ENCODE measurements at regions of chr6 and their contacts with region 1.

Region 1: GRCh38 chr6:53171605-53172446 is 23.2 kb upstream of the GCM1 start:
- DNase-seq: peak; percentile 86 to 93 (median 90)
- H3K4me3 ChIP-seq: no peak overlapping the region
- H3K27ac ChIP-seq: peak overlapping the region in 10 of 59 donors; percentile 9 to 65 (median 25)
- H3K27me3 ChIP-seq: no peaks in the 10 kb centered on the region
- CTCF ChIP-seq: peak; percentile 100

Region 2: GRCh38 chr6:52887910-52888535 is 283.8 kb before region 1 on chr6:
- intact Hi-C with region 1: no loop called
- DNase-seq: no peak
- H3K4me3 ChIP-seq: no peak overlapping the region
- H3K27ac ChIP-seq: no peak overlapping the region
- H3K27me3 ChIP-seq: no peaks in the 10 kb centered on the region
- CTCF ChIP-seq: no peak

Region 3: GRCh38 chr6:53119772-53120409 is 51.9 kb before region 1 on chr6:
- intact Hi-C with region 1: loop called in 1 of 2 experiments (anchors 10 kb)
- DNase-seq: no peak
- H3K4me3 ChIP-seq: no peak overlapping the region
- H3K27ac ChIP-seq: no peak overlapping the region
- H3K27me3 ChIP-seq: peaks cover 0 to 7% (median 0%) of the 10 kb centered on the region in 45 donors
- CTCF ChIP-seq: no peak

Region 4: DNA sequence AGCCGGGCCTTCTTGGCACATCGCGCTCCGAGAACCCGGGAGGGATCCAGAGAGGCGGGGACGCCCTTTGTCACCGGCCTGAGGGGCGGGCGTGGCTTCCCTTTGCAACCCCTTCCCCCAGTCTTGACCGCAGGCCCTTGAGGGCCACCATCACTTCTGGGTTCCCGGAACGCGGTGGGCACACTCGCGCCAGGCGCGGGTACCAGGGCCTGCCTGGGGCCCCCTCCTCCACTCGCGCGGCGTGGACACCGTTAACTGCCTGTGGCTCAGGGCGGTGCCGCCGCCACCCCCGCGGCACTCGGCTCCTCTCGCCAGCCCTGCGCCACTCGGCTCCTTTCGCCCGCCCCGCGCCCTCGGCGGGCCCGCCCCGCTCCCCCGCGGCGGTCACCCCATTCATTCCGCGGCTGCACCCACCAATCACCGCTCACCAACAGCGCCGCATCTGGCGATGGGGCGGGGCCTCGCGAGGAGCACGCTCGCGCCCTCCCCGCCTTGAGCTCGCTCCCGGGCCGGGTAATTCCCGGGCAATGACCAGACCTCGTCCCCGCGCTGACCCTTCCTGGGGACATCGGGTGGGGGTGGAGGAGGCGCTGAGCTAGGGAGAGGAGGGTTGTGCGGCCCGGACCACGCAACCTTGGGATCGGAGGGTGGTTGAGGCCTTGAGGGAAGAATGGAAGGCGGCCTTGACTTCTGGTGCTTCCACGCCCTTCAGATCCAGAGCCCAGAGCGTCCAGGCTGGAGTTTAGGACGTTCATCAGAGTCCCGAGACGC is 187.4 kb after region 1 on chr6:
- intact Hi-C with region 1: loop called (anchors 5 kb)
- DNase-seq: peak; percentile 93 to 99 (median 96)
- H3K4me3 ChIP-seq: peak overlapping the region; percentile 58 to 93 (median 79)
- H3K27ac ChIP-seq: peak overlapping the region; percentile 89 to 100 (median 98)
- H3K27me3 ChIP-seq: no peaks in the 10 kb centered on the region
- CTCF ChIP-seq: peak in 33 of 56 donors; percentile 12 to 60 (median 26)

Region 5: DNA sequence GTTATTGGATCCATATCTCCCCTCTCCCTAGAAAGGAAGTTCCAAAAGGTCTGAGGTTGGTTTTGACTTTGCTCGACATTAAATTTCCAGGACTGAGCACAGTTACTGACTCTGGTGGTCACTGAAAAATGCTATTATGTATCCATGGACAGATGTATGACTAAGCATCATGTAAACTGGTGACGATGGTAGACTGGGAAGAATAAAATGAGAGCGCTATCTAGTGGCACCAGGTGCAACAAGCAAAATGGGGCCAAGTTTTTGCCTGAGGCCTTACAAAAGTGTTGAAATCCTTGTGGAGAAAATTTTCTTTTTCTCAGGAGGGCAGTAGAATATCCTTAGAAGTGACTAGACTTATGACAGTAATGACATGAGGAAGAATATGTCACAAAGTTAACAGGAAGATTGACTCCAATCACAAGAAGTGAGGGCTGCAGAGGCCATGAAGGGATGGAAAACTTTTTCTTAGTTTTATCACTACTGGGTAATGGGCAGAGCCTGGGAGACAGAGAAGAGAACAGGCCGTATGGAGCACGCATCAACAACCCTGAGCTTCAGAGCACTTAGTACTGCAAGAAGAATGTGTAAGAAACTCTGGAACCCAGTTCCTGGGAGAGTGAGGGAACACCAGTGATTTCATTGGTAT is 265.9 kb after region 1 on chr6:
- intact Hi-C with region 1: loop called (anchors 2 kb)
- DNase-seq: peak in 2 of 10 donors; percentile 36 to 38
- H3K4me3 ChIP-seq: no peak overlapping the region
- H3K27ac ChIP-seq: peak overlapping the region in 57 of 59 donors; percentile 20 to 97 (median 88)
- H3K27me3 ChIP-seq: peaks cover 0 to 2% (median 0%) of the 10 kb centered on the region in 45 donors
- CTCF ChIP-seq: peak in 55 of 56 donors; percentile 35 to 84 (median 67)

Region 6: GRCh38 chr6:53651764-53652401 is 480.1 kb after region 1 on chr6:
- intact Hi-C with region 1: loop called (anchors 5 to 10 kb)
- DNase-seq: peak; percentile 26 to 84 (median 70)
- H3K4me3 ChIP-seq: peak overlapping the region; percentile 58 to 87 (median 71)
- H3K27ac ChIP-seq: peak overlapping the region in 38 of 59 donors; percentile 1 to 77 (median 38)
- H3K27me3 ChIP-seq: no peaks in the 10 kb centered on the region
- CTCF ChIP-seq: peak in 54 of 56 donors; percentile 24 to 77 (median 60)

Measured in dorsolateral prefrontal cortex (tissue), 120 donors.